HAP-1 (cell line): ENCODE measurements at regions of chr9 and their contacts with region 1.

Region 1: GRCh38 chr9:36798350-36799065 is 225.8 kb downstream of the MELK start:
- DNase-seq: no peak
- H3K4me3 ChIP-seq: no peak overlapping the region
- H3K4me1 ChIP-seq: no peaks in the 10 kb centered on the region
- H3K27me3 ChIP-seq: no peaks in the 10 kb centered on the region; the same call in 1 of the 2 replicates

Region 2: GRCh38 chr9:36676778-36677485 is 121.6 kb before region 1 on chr9:
- in situ Hi-C with region 1: loop called (anchors 25 kb)
- DNase-seq: no peak
- H3K4me3 ChIP-seq: no peak overlapping the region
- H3K4me1 ChIP-seq: peaks cover 10% of the 10 kb centered on the region; the same call in 1 of the 2 replicates
- H3K27me3 ChIP-seq: no peaks in the 10 kb centered on the region

Region 3: GRCh38 chr9:36750630-36751029 is 47.9 kb before region 1 on chr9:
- in situ Hi-C with region 1: loop called (anchors 5 kb)
- DNase-seq: no peak
- H3K4me3 ChIP-seq: no peak overlapping the region
- H3K4me1 ChIP-seq: no peaks in the 10 kb centered on the region
- H3K27me3 ChIP-seq: peaks cover 26% of the 10 kb centered on the region; the same call in 1 of the 2 replicates

Region 4: GRCh38 chr9:36847781-36848673 is 49.5 kb after region 1 on chr9:
- in situ Hi-C with region 1: loop called (anchors 5 kb)
- DNase-seq: no peak
- H3K4me3 ChIP-seq: no peak overlapping the region
- H3K4me1 ChIP-seq: no peaks in the 10 kb centered on the region
- H3K27me3 ChIP-seq: 0 out of 2 replicates have a peak, but pooled peaks cover 1% of the 10 kb centered on the region

Region 5: DNA sequence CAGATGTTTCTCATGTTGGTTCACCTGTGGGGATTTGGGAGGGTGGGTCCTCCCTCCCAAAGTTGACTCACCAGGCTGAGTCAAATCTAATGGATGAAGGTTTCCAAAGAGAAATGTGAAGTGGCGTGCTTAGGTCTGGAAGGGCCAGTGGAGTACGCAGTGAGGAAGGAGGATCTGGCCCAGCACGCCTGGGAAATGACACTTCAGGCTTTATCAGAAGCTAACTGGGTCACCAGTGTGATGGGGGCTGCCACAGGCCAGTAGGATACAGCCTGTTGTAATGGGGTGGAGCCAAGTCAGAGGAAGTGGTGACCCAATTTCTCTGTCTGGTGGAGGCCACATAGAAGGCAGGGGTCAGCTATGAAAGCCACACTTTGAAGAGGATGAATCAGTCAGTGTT is 705.2 kb after region 1 on chr9:
- in situ Hi-C with region 1: no loop called
- DNase-seq: no peak
- H3K4me3 ChIP-seq: no peak overlapping the region
- H3K4me1 ChIP-seq: no peaks in the 10 kb centered on the region
- H3K27me3 ChIP-seq: no peaks in the 10 kb centered on the region